ENCODE measurements at regions of chr5 and their contacts with region 1.

Region 1: DNA sequence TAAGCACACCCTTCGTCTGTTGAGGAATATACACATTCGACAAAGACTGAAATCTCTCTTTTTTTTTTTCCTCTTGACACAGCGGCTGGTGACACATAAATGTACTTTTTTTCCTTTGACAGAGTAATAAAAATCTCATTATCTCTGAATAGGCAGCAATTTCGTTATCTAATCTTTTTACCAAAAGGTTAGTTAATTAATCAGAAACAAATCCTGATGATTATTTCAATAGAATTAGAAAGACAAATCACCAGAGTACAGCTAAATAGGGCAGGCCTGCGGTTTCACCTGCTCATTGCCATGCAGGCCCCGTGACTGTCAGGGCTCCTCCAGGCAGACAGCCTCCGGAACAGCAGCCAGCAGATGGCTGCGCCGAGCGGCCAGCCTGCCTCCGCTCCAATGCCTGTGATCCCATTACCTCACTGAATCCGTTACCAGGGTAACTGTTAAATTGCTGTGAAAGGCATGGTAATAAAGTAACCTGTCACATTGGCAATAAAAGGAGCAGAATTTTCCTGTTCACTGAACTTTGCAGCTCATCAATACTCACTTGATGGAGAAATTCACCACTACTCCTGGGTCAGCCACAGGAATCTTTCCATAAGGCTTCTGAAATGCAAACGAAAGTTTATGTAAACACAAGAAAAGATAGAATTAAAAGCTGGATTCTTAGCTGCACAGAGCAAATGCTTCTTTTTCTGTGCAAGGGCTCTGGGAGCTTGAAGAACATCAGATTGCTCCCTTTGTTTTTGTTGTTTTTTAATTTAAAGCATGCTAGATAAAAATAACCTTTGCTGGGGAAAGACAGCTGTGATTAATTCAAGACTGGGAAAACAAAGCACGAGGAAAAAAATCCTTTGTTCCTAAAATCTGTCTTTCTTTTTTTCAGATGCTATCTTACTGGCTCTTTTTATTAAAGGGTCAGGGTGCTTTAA is 666.4 kb upstream of the ZNF608 start:
- DNase-seq: peak; percentile 56
- ATAC-seq: peak; percentile 51
- H3K4me3 ChIP-seq: peak overlapping the region; percentile 30; the same call in 1 of the 2 replicates
- H3K27ac ChIP-seq: 0 out of 2 replicates have a peak overlapping the region, but pooled peaks have one; percentile 5
- H3K4me1 ChIP-seq: peaks cover 53% of the 10 kb centered on the region
- H3K27me3 ChIP-seq: no peaks in the 10 kb centered on the region
- CTCF ChIP-seq: peak; percentile 50

Region 2: GRCh38 chr5:124649491-124650146 is 763.2 kb before region 1 on chr5:
- CTCF ChIA-PET with region 1: no interaction called
- POLR2A ChIA-PET with region 1: no interaction called
- intact Hi-C with region 1: loop called (anchors 5 kb)
- DNase-seq: peak; percentile 70
- ATAC-seq: peak; percentile 45
- H3K4me3 ChIP-seq: peak overlapping the region; percentile 29; the same call in 1 of the 2 replicates
- H3K27ac ChIP-seq: 0 out of 2 replicates have a peak overlapping the region, but pooled peaks have one; percentile 10
- H3K4me1 ChIP-seq: peaks cover 32% of the 10 kb centered on the region
- H3K27me3 ChIP-seq: no peaks in the 10 kb centered on the region
- CTCF ChIP-seq: no peak

Region 3: GRCh38 chr5:124996764-124997077 is 416.1 kb before region 1 on chr5:
- CTCF ChIA-PET with region 1: no interaction called
- POLR2A ChIA-PET with region 1: no interaction called
- intact Hi-C with region 1: loop called (anchors 5 kb)
- DNase-seq: peak; percentile 4
- ATAC-seq: no peak
- H3K4me3 ChIP-seq: no peak overlapping the region
- H3K27ac ChIP-seq: no peak overlapping the region
- H3K4me1 ChIP-seq: peaks cover 18% of the 10 kb centered on the region
- H3K27me3 ChIP-seq: no peaks in the 10 kb centered on the region
- CTCF ChIP-seq: no peak

Region 4: GRCh38 chr5:125277494-125278154 is 135.2 kb before region 1 on chr5:
- CTCF ChIA-PET with region 1: no interaction called
- POLR2A ChIA-PET with region 1: no interaction called
- intact Hi-C with region 1: loop called (anchors 2 kb)
- DNase-seq: peak; percentile 93
- ATAC-seq: peak; percentile 96
- H3K4me3 ChIP-seq: no peak overlapping the region; the same call in 1 of the 2 replicates
- H3K27ac ChIP-seq: peak overlapping the region; percentile 70
- H3K4me1 ChIP-seq: peaks cover 34% of the 10 kb centered on the region
- H3K27me3 ChIP-seq: no peaks in the 10 kb centered on the region
- CTCF ChIP-seq: no peak

Region 5: DNA sequence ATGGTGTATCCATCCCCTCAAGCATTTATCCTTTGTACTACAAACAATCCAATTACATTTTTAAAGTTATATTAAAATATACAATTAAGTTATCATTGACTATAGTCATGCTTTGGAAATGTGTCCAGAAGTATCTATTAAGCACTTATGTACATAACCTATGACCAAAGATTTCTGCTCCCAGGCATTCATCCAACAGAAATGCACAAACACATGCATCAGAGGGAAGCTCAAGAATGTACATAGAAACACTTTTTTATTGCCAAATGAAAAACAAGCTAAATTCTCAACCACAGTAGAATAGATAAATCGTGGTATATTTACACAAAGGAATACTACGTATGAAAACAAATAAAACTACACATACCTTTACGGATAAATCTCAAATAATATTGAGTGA is 34.2 kb after region 1 on chr5:
- CTCF ChIA-PET with region 1: interaction called, 3 read pairs
- POLR2A ChIA-PET with region 1: no interaction called
- intact Hi-C with region 1: loop called (anchors 2 kb)
- DNase-seq: peak; percentile 89
- ATAC-seq: peak; percentile 95
- H3K4me3 ChIP-seq: no peak overlapping the region
- H3K27ac ChIP-seq: 0 out of 2 replicates have a peak overlapping the region, but pooled peaks have one; percentile 37
- H3K4me1 ChIP-seq: peaks cover 7% of the 10 kb centered on the region; the same call in 1 of the 2 replicates
- H3K27me3 ChIP-seq: no peaks in the 10 kb centered on the region
- CTCF ChIP-seq: no peak

Region 6: DNA sequence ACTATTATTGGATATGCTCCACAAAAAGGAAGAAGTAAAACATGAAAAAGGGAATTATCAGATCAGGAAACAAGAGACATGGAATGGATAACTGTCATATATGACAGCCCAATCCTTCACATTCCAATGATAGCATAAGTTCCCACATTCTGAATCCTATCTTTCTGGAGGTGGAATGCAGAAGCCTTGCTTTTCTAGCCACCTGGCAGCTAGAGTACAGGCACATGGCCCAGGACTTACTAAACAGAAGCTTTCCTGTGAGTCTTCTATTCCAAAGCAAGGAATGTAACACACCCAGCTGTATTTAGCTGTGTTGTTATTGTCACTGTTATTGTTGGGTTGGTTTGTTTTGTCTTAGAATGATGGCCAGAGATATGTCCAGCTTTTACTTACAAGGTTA is 114.1 kb after region 1 on chr5:
- CTCF ChIA-PET with region 1: no interaction called
- POLR2A ChIA-PET with region 1: no interaction called
- intact Hi-C with region 1: no loop called
- DNase-seq: no peak
- ATAC-seq: no peak
- H3K4me3 ChIP-seq: no peak overlapping the region
- H3K27ac ChIP-seq: no peak overlapping the region
- H3K4me1 ChIP-seq: no peaks in the 10 kb centered on the region
- H3K27me3 ChIP-seq: no peaks in the 10 kb centered on the region
- CTCF ChIP-seq: no peak

Region 7: GRCh38 chr5:126138281-126138931 is 725.6 kb after region 1 on chr5:
- CTCF ChIA-PET with region 1: interaction called, 3 read pairs
- POLR2A ChIA-PET with region 1: no interaction called
- intact Hi-C with region 1: loop called (anchors 5 kb)
- DNase-seq: peak; percentile 23
- ATAC-seq: peak; percentile 77
- H3K4me3 ChIP-seq: no peak overlapping the region
- H3K27ac ChIP-seq: peak overlapping the region; percentile 44
- H3K4me1 ChIP-seq: peaks cover 33% of the 10 kb centered on the region
- H3K27me3 ChIP-seq: no peaks in the 10 kb centered on the region
- CTCF ChIP-seq: no peak